Common myeloid progenitor, CD34-positive (primary cell): ENCODE measurements at regions of chr12 and their contacts with region 1.

Region 1: DNA sequence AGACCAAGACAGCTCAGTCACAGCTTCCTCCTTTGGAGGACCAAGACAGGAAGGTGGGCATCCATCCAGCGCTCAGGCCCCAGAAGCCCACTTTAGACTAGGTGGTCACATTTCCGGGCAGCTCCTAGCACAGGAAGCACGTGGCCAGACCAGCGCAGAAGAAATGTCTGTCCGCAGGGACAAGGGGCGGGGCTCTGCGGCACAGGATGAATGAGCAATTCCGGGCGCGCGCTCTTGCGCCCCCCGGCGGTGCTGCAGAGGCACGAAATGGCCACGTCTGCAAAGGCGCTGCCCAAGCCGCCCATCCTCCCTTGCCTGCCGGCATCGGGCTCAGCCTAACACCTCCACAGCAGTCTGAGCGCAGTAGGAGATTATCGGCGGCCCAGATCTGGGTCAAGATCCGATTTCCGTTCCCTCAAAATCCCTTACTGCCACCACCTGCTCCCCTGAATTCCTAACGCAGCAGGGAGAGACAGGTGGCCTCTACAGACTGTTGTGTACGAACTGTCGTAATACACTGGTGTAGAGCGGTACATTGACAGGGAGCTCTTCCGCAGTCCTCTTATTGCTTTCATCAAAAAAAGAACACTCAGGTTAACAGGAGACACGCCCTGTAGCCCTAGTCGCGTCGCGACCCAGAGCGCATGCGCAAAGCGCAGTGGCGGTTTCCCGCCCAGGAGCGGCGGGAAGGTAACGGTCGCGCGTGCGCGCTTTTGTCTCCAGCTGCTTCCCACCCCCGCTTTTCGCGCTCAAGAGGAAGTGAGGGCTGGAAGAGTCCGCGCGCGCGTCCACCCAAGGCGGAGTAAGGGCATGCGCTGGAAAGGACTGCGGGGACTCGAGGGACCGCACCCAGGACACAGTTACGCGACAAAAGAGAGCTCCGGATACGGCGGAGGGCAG is 794 bp downstream of the TUBA1B start:
- DNase-seq: peak; percentile 88 to 94 (median 93)
- H3K4me3 ChIP-seq: peak overlapping the region; percentile 57 to 100 (median 89)
- H3K27ac ChIP-seq: peak overlapping the region; percentile 79 to 91
- H3K4me1 ChIP-seq: peaks cover 8 to 40% (median 33%) of the 10 kb centered on the region in 4 experiments
- H3K27me3 ChIP-seq: no peaks in the 10 kb centered on the region

Region 2: GRCh38 chr12:49088190-49088931 is 42.0 kb before region 1 on chr12:
- CTCF ChIA-PET with region 1: interaction called, 25 read pairs
- POLR2A ChIA-PET with region 1: interaction called, 7 read pairs
- DNase-seq: peak; percentile 87 to 91 (median 90)
- H3K4me3 ChIP-seq: peak overlapping the region in 6 of 7 experiments; percentile 1 to 60 (median 35)
- H3K27ac ChIP-seq: no peak overlapping the region
- H3K4me1 ChIP-seq: peaks cover 11 to 51% (median 44%) of the 10 kb centered on the region in 4 experiments
- H3K27me3 ChIP-seq: peaks cover 13 to 50% (median 23%) of the 10 kb centered on the region in 5 experiments

Region 3: DNA sequence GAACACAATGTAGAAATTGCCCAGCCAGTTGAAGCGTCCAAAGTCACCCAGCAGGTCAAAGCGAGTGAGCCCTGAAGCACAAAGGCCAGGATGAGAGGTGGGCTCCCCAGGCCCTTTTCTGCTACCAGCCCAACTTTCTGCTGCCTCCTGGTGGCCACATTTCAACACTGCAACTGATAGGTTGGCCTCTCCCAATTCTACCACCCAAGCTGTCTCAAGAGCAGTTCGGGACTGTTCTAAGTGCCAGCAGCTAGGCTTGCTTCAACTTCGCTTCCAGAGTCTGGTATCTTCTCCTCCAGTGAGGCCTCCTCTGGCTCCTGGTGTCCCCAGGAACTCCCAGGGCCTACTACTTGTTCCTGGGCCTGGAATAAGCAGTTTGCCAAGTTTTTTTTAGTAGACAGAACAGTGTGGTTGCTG is 32.4 kb before region 1 on chr12:
- CTCF ChIA-PET with region 1: interaction called, 22 read pairs
- POLR2A ChIA-PET with region 1: interaction called, 3 read pairs
- DNase-seq: peak; percentile 53 to 76 (median 65)
- H3K4me3 ChIP-seq: no peak overlapping the region
- H3K27ac ChIP-seq: no peak overlapping the region
- H3K4me1 ChIP-seq: peaks cover 0 to 17% (median 12%) of the 10 kb centered on the region in 4 experiments
- H3K27me3 ChIP-seq: peaks cover 5 to 30% (median 16%) of the 10 kb centered on the region in 5 experiments

Region 4: DNA sequence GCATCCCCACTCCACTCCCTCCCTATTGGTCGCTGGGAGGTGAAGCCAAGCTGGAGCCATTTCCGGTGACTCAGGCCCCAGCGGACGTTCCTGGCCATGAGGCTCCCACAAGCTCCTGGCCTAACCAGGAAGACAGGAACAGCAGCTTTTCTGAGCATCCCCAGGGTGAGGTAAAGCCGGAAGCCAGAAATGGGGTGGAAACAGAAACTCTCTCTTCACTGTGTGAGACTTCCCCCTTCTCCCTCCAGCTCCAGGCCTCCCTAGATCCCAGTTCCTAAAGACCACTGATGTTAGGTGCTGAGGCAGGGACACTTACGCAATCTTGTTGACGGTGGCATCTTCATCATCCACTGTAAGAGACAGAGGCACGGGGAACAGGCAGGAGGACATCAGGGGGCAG is 24.8 kb before region 1 on chr12:
- CTCF ChIA-PET with region 1: interaction called, 21 read pairs
- POLR2A ChIA-PET with region 1: interaction called, 25 read pairs
- DNase-seq: no peak
- H3K4me3 ChIP-seq: no peak overlapping the region
- H3K27ac ChIP-seq: no peak overlapping the region
- H3K4me1 ChIP-seq: peaks cover 4 to 22% (median 20%) of the 10 kb centered on the region in 4 experiments
- H3K27me3 ChIP-seq: no peaks in the 10 kb centered on the region

Region 5: GRCh38 chr12:49110464-49111155 is 19.8 kb before region 1 on chr12 and contains the start of gene LMBR1L:
- CTCF ChIA-PET with region 1: interaction called, 21 read pairs
- POLR2A ChIA-PET with region 1: interaction called, 25 read pairs
- DNase-seq: peak; percentile 99
- H3K4me3 ChIP-seq: peak within 1 kb of the TSS; percentile 73 to 98 (median 90)
- H3K27ac ChIP-seq: peak within 1 kb of the TSS; percentile 72 to 89
- H3K4me1 ChIP-seq: peaks cover 4 to 23% (median 20%) of the 10 kb centered on the region in 4 experiments
- H3K27me3 ChIP-seq: no peaks in the 10 kb centered on the region

Region 6: GRCh38 chr12:49188914-49189367 is 58.5 kb after region 1 on chr12 and contains the start of gene TUBA1A:
- CTCF ChIA-PET with region 1: interaction called, 3 read pairs
- POLR2A ChIA-PET with region 1: interaction called, 31 read pairs
- DNase-seq: peak; percentile 99 to 100 (median 99)
- H3K4me3 ChIP-seq: peak within 1 kb of the TSS; percentile 83 to 98 (median 95)
- H3K27ac ChIP-seq: peak within 1 kb of the TSS; percentile 96 to 99
- H3K4me1 ChIP-seq: peaks cover 8 to 22% (median 13%) of the 10 kb centered on the region in 4 experiments
- H3K27me3 ChIP-seq: no peaks in the 10 kb centered on the region

Region 7: GRCh38 chr12:49232940-49233841 is 102.8 kb after region 1 on chr12:
- CTCF ChIA-PET with region 1: interaction called, 36 read pairs
- POLR2A ChIA-PET with region 1: interaction called, 7 read pairs
- DNase-seq: peak; percentile 19 to 64 (median 41)
- H3K4me3 ChIP-seq: peak overlapping the region in 6 of 7 experiments; percentile 16 to 85 (median 67)
- H3K27ac ChIP-seq: peak overlapping the region; percentile 86 to 92
- H3K4me1 ChIP-seq: peaks cover 15 to 63% (median 21%) of the 10 kb centered on the region in 4 experiments
- H3K27me3 ChIP-seq: no peaks in the 10 kb centered on the region